Sigmoid colon (tissue), 7 donors: ENCODE measurements at regions of chr14 and their contacts with region 1.

Region 1: DNA sequence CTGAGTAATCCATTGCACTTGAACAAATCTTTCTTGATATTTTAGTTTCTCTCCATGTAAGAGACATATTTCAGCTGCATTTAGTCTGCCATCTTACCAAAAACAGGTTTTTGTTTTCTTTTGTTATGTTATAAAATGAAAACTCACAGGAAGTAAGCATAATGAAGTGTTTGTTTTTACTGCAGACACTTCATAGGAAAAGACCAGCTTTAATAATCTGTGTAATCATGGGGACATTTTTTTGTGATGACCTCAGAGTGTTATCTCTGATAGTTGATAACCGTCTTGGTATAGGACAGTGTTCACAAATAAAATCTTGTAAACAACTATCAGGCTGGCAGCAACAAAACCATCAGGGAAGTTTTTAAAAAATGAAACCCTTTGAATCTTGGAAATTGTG is 266.2 kb upstream of the OR4E1 start:
- DNase-seq: no peak
- H3K4me3 ChIP-seq: no peak overlapping the region
- H3K27ac ChIP-seq: no peak overlapping the region
- H3K4me1 ChIP-seq: peaks cover 0 to 10% (median 1%) of the 10 kb centered on the region in 4 donors
- H3K27me3 ChIP-seq: no peaks in the 10 kb centered on the region
- CTCF ChIP-seq: no peak
- EP300 ChIP-seq: no peak
- POLR2A ChIP-seq: no peak

Region 2: DNA sequence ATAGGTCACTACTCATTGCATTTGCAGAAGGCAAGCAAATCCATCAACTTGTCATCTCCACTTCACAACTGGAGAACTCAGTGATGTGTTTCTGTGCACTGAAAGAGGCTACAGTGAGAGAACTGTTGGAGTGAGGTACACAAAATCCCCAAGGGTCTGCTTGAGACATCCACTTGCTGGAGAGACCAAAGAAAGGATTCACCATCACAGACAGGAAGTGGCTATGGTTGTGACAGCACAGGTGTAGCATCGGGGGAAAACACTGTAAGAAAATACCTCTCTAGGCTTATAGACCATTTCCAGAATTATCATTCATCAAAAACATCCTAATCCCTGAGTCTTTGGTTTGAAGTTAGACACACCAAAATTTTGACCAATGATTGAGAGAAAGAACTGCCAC is 64.9 kb before region 1 on chr14:
- intact Hi-C with region 1: loop called (anchors 5 kb)
- DNase-seq: no peak
- H3K4me3 ChIP-seq: no peak overlapping the region
- H3K27ac ChIP-seq: no peak overlapping the region
- H3K4me1 ChIP-seq: peaks cover 0 to 19% (median 11%) of the 10 kb centered on the region in 4 donors
- H3K27me3 ChIP-seq: no peaks in the 10 kb centered on the region
- CTCF ChIP-seq: no peak
- EP300 ChIP-seq: no peak
- POLR2A ChIP-seq: no peak